B cell (primary cell): ENCODE measurements at regions of chrX and their contacts with region 1.

Region 1: GRCh38 chrX:12974796-12975669 is at the start of gene TMSB4X:
- DNase-seq: peak; percentile 89
- ATAC-seq: peak; percentile 59
- H3K4me3 ChIP-seq: peak within 1 kb of the TSS; percentile 85 to 93 (median 89)
- H3K4me3 Mint-ChIP-seq: peak within 1 kb of the TSS; percentile 99
- H3K27ac ChIP-seq: peak within 1 kb of the TSS; percentile 84 to 86
- H3K27ac Mint-ChIP-seq: peak within 1 kb of the TSS; percentile 98
- H3K4me1 ChIP-seq: peaks cover 49 to 52% of the 10 kb centered on the region in 2 donors
- H3K4me1 Mint-ChIP-seq: peaks cover 60% of the 10 kb centered on the region
- H3K27me3 ChIP-seq: no peaks in the 10 kb centered on the region
- H3K27me3 Mint-ChIP-seq: no peaks in the 10 kb centered on the region
- CTCF ChIP-seq: no peak
- total RNA-seq, gene TMSB4X: 2,468 and 2,550 TPM in 2 replicates

Region 2: GRCh38 chrX:13000301-13000811 is 25.3 kb after region 1 on chrX:
- CTCF ChIA-PET with region 1: interaction called, 21 read pairs
- POLR2A ChIA-PET with region 1: interaction called, 10 read pairs
- intact Hi-C with region 1: loop called (anchors 1 kb)
- DNase-seq: peak; percentile 79
- ATAC-seq: peak; percentile 72
- H3K4me3 ChIP-seq: peak overlapping the region in 4 of 5 experiments; percentile 3 to 40 (median 10)
- H3K4me3 Mint-ChIP-seq: peak overlapping the region; percentile 84
- H3K27ac ChIP-seq: peak overlapping the region; percentile 76 to 80
- H3K27ac Mint-ChIP-seq: peak overlapping the region; percentile 95
- H3K4me1 ChIP-seq: peaks cover 64 to 69% of the 10 kb centered on the region in 2 donors
- H3K4me1 Mint-ChIP-seq: peaks cover 64% of the 10 kb centered on the region
- H3K27me3 ChIP-seq: no peaks in the 10 kb centered on the region
- H3K27me3 Mint-ChIP-seq: no peaks in the 10 kb centered on the region
- CTCF ChIP-seq: no peak

Region 3: DNA sequence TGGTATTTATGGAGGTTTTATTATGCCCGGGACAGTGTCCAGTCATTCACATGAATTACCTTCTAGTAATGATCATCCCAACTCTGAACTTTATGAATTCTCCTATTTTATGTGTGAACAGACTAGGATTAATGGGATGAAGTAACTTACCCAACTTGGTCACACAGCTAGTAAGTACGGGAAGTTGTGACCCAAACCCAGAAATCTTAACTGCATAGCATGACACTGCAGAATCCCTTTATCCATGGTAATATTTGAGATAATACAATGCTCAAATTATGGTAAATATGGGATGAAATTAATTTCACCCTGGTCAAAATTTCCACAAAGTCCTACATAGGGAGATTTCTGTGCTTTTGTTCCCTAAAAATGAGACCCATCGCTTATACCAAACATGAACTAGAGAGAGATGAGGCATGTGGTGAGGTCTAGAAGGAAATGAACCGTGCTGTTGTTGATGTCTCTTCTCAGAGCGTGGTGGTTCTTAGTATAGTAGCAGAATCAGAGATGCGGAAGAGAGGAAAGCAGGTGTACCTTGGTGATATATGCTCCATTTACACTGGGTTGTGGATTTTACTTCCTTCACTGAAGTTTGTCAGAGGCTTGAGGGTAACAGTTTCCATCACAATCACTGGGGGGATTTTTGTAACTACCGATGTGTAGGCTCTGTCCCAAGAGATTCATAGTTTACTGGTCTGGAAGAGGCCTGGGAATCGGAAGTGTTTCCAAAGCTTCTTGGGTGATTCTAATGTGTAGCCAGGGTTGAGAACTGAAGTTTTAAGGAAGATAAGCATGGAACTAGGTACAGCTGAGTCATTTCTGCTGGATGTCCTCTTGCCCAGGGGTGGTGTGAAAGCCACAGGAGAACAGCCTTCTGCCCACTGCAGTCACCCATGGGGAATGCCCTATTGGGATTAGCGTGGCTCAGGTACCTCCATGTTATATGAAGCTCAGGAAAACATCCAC is 99.5 kb after region 1 on chrX:
- CTCF ChIA-PET with region 1: interaction called, 8 read pairs
- POLR2A ChIA-PET with region 1: interaction called, 29 read pairs
- intact Hi-C with region 1: no loop called
- DNase-seq: peak; percentile 78
- ATAC-seq: peak; percentile 96
- H3K4me3 ChIP-seq: peak overlapping the region in 2 of 5 experiments; percentile 11 to 13
- H3K4me3 Mint-ChIP-seq: peak overlapping the region; percentile 79
- H3K27ac ChIP-seq: peak overlapping the region; percentile 94 to 98
- H3K27ac Mint-ChIP-seq: peak overlapping the region; percentile 98
- H3K4me1 ChIP-seq: peaks cover 66 to 67% of the 10 kb centered on the region in 2 donors
- H3K4me1 Mint-ChIP-seq: peaks cover 53% of the 10 kb centered on the region
- H3K27me3 ChIP-seq: no peaks in the 10 kb centered on the region
- H3K27me3 Mint-ChIP-seq: no peaks in the 10 kb centered on the region
- CTCF ChIP-seq: no peak

Region 4: DNA sequence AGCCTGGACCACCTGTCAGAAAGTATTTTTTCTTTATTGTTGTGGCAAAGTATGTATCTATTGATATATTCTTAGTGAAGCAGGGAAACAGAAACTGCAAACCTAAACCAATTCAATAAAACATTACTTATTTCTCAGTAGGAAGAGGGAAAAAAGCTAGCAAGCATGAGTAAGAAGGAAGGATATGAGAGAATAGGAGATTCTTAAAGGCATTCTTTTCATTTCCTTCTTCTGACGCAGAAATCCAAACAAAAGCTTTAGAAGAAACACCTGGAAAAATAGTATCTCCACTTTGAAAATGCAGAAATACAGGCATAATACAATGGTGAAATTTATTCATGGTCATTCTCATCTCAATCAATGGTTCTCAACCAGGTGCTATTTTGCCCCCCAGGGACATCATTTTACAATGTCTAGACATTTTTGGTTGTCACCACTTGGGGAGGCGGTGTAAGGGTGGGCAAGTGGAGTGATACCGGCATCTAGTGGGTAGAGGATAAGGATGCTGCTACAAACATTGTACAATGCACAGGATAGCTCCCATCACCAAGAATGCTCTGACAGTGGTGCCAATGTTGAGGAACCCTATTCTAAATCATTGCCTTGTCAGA is 366.6 kb after region 1 on chrX:
- CTCF ChIA-PET with region 1: interaction called, 3 read pairs
- POLR2A ChIA-PET with region 1: no interaction called
- intact Hi-C with region 1: loop called (anchors 10 kb)
- DNase-seq: no peak
- ATAC-seq: no peak
- H3K4me3 ChIP-seq: no peak overlapping the region
- H3K4me3 Mint-ChIP-seq: no peak overlapping the region
- H3K27ac ChIP-seq: no peak overlapping the region
- H3K27ac Mint-ChIP-seq: no peak overlapping the region
- H3K4me1 ChIP-seq: peaks cover 15 to 23% of the 10 kb centered on the region in 2 donors
- H3K4me1 Mint-ChIP-seq: peaks cover 19% of the 10 kb centered on the region
- H3K27me3 ChIP-seq: no peaks in the 10 kb centered on the region
- H3K27me3 Mint-ChIP-seq: no peaks in the 10 kb centered on the region
- CTCF ChIP-seq: no peak

Region 5: DNA sequence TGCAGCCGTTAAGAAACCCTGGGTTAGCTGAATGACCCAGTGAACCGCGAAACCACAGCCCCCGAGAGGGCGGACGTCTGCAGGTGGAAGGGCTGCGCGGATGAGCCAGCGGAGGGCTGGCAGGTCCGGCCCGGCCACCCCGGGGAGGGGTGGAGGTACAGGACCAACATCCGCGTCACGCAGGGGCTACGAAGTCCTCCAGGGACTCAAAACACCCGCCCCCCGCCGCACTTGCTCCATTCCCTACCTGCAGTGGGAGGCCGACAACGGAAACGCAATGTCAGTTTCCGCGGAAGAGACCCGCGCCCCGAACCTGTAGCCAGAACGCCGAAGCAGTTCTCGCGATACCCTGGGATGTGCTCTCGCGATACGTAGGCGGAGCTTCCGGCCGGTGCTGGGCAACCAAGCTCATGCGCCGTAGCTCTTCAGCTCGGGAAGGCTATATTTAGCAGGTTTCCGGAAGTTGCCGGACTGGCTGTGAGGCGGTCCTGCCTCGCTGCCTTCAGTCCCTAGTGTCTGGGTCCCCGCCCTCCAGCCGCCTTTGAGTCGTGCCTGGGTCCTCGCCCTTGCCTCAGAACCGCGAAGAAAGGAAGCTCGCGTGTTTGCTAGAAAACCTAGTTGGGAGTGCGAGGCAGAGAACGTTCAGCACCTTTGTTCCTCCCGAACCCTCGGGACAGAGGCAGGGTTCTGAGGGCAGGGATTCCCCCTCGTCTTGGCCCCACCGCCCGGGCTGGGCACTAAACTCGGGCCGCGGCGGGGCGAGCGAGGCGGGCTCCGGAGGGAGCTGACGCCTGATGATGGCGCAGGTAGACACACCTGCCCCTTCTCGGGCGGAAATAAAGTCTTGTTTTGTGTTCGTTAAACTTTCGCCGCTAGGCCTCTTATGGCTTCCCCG is 759.5 kb after region 1 on chrX and contains the starts of genes OFD1 and TRAPPC2:
- CTCF ChIA-PET with region 1: no interaction called
- POLR2A ChIA-PET with region 1: interaction called, 3 read pairs
- intact Hi-C with region 1: loop called (anchors 2 kb)
- DNase-seq: peak; percentile 94
- ATAC-seq: peak; percentile 80
- H3K4me3 ChIP-seq: peak within 1 kb of the TSS; percentile 73 to 98 (median 76)
- H3K4me3 Mint-ChIP-seq: peak within 1 kb of the TSS; percentile 93
- H3K27ac ChIP-seq: peak within 1 kb of the TSS; percentile 95 to 97
- H3K27ac Mint-ChIP-seq: peak within 1 kb of the TSS; percentile 97
- H3K4me1 ChIP-seq: peaks cover 40 to 43% of the 10 kb centered on the region in 2 donors
- H3K4me1 Mint-ChIP-seq: peaks cover 52% of the 10 kb centered on the region
- H3K27me3 ChIP-seq: no peaks in the 10 kb centered on the region
- H3K27me3 Mint-ChIP-seq: no peaks in the 10 kb centered on the region
- CTCF ChIP-seq: no peak
- total RNA-seq, gene OFD1: 84.9 and 87.8 TPM in 2 replicates
- total RNA-seq, gene TRAPPC2: 28.0 and 30.3 TPM in 2 replicates